HEK293 (cell line): ENCODE measurements at regions of chr1 and their contacts with region 1.

Region 1: GRCh38 chr1:32876341-32877210 is 5.9 kb upstream of the FNDC5 start:
- H3K4me3 ChIP-seq: no peak overlapping the region
- H3K27ac ChIP-seq: no peak overlapping the region
- H3K4me1 ChIP-seq: no peaks in the 10 kb centered on the region
- CTCF ChIP-seq: peak; percentile 94

Region 2: DNA sequence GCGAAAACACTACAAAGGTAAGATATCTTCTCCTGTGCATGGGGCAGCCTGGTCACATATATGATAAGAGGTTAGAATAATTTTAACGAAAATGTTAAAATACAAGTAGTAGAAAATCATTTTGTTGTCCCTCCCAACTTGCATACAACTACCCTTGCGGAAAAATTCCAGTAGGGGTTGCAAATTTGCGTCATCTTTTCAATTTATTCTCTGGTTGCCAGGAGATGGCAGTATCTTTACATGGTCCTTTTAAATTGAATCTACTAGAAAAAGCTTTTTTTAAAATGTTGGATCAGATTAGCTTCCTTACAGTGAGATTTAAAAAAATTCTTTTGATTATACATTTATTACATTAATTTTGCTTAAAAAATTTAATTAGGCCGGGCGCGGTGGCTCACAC is 48.2 kb before region 1 on chr1:
- CTCF ChIA-PET with region 1: interaction called, 12 read pairs
- POLR2A ChIA-PET with region 1: no interaction called
- H3K4me3 ChIP-seq: no peak overlapping the region
- H3K27ac ChIP-seq: no peak overlapping the region
- H3K4me1 ChIP-seq: no peaks in the 10 kb centered on the region
- CTCF ChIP-seq: peak; percentile 25; the same call in 1 of the 2 replicates

Region 3: GRCh38 chr1:32892368-32893197 is 16.0 kb after region 1 on chr1:
- CTCF ChIA-PET with region 1: interaction called, 50 read pairs
- POLR2A ChIA-PET with region 1: no interaction called
- H3K4me3 ChIP-seq: no peak overlapping the region
- H3K27ac ChIP-seq: no peak overlapping the region
- H3K4me1 ChIP-seq: no peaks in the 10 kb centered on the region
- CTCF ChIP-seq: no peak

Region 4: DNA sequence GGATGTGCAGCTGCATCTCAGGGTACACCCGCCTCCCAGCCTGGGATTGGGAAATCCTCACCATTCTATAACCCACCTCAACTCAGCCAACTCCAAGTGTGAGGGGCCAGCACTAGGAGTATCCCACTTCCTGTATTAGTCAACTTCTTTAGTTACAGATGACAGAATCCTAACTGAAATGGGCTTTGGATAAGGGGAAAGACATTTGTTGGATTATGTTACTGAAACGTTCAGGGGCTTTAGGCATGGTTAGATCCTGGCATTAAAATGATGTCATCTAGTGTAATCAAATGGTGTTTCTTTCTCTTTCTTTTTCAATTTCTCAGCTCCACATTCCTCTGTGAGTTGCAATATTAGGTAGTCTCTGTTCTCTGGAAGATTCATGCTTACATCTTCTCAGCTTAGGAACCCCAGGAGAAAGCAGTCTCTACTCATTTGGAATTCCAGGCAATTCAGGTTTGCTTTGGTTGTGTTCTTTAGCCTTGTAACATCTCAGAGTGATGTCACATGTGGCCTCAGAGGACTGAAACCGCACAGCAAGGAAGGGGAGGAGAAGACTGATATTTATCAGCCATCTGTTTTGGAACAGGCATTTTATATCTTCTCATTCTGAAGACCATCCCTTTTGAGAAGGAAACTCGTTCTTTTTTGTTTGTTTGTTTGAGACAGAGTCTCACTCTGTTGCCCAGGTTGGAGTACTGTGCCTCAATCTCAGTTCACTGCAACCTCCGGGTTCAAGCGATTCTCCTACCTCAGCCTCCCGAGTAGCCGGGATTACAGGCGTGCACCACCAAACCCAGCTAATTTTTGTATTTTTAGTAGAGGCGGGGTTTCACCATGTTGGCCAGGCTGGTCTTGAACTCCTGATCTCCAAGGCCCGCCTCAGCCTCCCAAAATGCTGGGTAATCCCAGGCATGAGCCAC is 43.5 kb after region 1 on chr1:
- CTCF ChIA-PET with region 1: interaction called, 11 read pairs
- POLR2A ChIA-PET with region 1: no interaction called
- H3K4me3 ChIP-seq: no peak overlapping the region
- H3K27ac ChIP-seq: no peak overlapping the region
- H3K4me1 ChIP-seq: no peaks in the 10 kb centered on the region
- CTCF ChIP-seq: no peak

Region 5: GRCh38 chr1:33086384-33086850 is 209.8 kb after region 1 on chr1:
- CTCF ChIA-PET with region 1: interaction called, 36 read pairs
- POLR2A ChIA-PET with region 1: no interaction called
- H3K4me3 ChIP-seq: no peak overlapping the region
- H3K27ac ChIP-seq: no peak overlapping the region
- H3K4me1 ChIP-seq: no peaks in the 10 kb centered on the region
- CTCF ChIP-seq: peak; percentile 78